IMR-90 (cell line): ENCODE measurements at regions of chr1 and their contacts with region 1.

Region 1: GRCh38 chr1:179310721-179311120 is 17.1 kb downstream of the SOAT1 start:
- DNase-seq: peak; percentile 96
- ATAC-seq: peak; percentile 86
- H3K4me3 ChIP-seq: no peak overlapping the region
- H3K27ac ChIP-seq: no peak overlapping the region; the same call in 1 of the 2 replicates
- H3K4me1 ChIP-seq: peaks cover 2% of the 10 kb centered on the region; the same call in 1 of the 2 replicates
- H3K27me3 ChIP-seq: no peaks in the 10 kb centered on the region
- CTCF ChIP-seq: no peak
- POLR2A ChIP-seq: no peak
- RAD21 ChIP-seq: 0 out of 2 replicates have a peak, but pooled peaks have one; percentile 4

Region 2: DNA sequence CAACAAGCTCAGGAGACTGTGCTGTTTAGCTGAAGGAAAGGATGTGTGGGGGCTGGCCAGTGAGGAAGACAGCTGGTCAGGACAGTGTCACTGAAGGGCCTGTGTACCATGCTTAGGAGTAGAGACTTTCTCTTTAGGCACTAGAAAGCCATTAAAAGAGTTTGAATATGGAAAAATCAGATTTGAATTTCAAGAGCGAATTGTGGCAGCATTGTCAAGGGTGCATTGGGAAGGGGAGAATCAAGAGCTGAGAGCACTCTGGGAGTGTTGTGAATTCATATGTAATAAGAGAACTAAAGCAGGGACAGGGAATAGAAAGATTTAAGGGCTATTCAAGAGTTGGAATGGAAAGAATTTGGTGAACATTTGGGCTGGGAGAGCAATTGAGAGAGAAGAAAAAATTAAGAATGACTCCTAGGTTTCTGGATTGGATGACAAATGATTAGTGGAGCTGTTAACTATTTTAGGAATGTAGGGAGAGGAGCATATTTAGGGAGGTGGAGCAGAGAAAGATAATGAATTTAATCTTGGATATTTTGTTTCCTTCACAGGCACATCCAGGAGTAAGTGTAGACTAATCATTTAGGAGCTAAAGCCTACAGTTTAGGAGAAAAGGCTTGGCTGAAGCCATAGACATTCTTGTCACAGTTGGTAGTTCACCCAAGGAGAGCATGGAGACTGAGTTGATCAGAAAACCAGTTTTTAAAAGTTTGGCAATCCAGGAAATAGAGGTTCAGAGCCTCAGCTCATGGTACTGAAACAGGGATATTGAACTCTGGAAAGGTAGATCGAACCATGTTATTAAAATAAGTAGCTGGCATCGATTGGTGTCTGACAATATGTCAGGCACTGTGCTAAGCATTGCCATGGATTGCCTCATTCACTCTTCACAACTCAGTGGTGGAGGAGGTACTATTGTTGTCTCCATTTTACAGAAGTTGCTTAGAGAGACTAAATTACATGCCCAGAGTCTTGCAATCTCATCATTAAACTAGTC is 251.9 kb before region 1 on chr1:
- CTCF ChIA-PET with region 1: no interaction called
- POLR2A ChIA-PET with region 1: no interaction called
- dilution Hi-C with region 1: no loop called
- in situ Hi-C with region 1: no loop called
- intact Hi-C with region 1: no loop called
- DNase-seq: no peak
- ATAC-seq: peak; percentile 87
- H3K4me3 ChIP-seq: no peak overlapping the region
- H3K27ac ChIP-seq: peak overlapping the region; percentile 53
- H3K4me1 ChIP-seq: peaks cover 5% of the 10 kb centered on the region
- H3K27me3 ChIP-seq: no peaks in the 10 kb centered on the region
- CTCF ChIP-seq: no peak
- POLR2A ChIP-seq: no peak
- RAD21 ChIP-seq: no peak

Region 3: GRCh38 chr1:179353546-179353945 is 42.8 kb after region 1 on chr1:
- CTCF ChIA-PET with region 1: no interaction called
- POLR2A ChIA-PET with region 1: no interaction called
- dilution Hi-C with region 1: no loop called
- in situ Hi-C with region 1: no loop called
- intact Hi-C with region 1: loop called (anchors 5 kb)
- DNase-seq: peak; percentile 80
- ATAC-seq: peak; percentile 97
- H3K4me3 ChIP-seq: no peak overlapping the region
- H3K27ac ChIP-seq: peak overlapping the region; percentile 80; the same call in 1 of the 2 replicates
- H3K4me1 ChIP-seq: peaks cover 2% of the 10 kb centered on the region; the same call in 1 of the 2 replicates
- H3K27me3 ChIP-seq: no peaks in the 10 kb centered on the region
- CTCF ChIP-seq: no peak
- POLR2A ChIP-seq: no peak
- RAD21 ChIP-seq: no peak